HepG2 (cell line): ENCODE measurements at regions of chr12 and their contacts with region 1.

Region 1: DNA sequence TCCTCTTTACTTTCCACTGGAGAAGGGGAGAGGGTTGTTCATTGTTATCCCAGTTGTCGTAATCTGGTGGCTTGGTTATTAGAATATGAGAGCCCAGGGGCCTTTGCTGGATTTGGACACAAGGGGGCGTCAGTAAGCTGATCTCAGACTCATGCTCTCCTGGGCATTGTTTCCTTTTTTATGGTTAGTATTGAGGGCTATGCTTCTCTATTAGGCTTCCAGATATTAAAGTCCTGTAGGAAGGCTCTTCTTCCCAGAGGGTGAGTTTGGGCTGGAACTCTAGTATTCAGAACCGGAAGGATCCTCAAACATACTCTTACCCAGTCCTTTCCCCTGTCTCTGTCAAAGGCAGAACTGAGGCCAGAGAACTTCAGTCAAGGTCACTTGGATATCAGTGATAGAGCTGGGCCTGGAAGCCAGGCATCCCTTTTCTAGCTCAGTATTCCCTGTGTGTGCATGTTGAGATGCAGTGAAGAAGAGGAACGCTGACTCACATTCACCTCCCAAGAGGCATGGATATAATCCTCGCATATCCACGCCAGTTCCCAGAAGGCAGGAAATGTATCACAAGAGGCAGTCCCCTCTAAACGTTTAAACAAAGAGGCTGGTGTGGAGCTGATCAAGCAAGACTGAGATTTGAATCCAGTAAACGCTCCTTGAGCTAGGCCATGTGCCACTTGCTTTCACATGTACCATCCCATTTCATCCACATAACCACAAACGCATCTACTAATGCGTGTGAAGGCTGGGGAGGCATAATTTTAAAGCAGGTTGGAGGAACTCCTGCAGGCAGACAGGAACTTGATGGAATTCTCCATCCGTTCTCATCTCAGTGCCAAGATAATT is 41.6 kb downstream of the UBE3B start:
- DNase-seq: peak; percentile 43
- ATAC-seq: peak; percentile 85
- H3K4me3 ChIP-seq: no peak overlapping the region
- H3K27ac ChIP-seq: no peak overlapping the region
- H3K4me1 ChIP-seq: peaks cover 6% of the 10 kb centered on the region
- H3K27me3 ChIP-seq: no peaks in the 10 kb centered on the region
- CTCF ChIP-seq: peak; percentile 86
- EP300 ChIP-seq: no peak
- POLR2A ChIP-seq: no peak
- RAD21 ChIP-seq: peak; percentile 58

Region 2: GRCh38 chr12:108838194-108839017 is 680.6 kb before region 1 on chr12:
- CTCF ChIA-PET with region 1: no interaction called
- POLR2A ChIA-PET with region 1: no interaction called
- in situ Hi-C with region 1: no loop called
- intact Hi-C with region 1: no loop called
- DNase-seq: peak; percentile 80
- ATAC-seq: peak; percentile 77
- H3K4me3 ChIP-seq: no peak overlapping the region
- H3K27ac ChIP-seq: peak overlapping the region; percentile 54
- H3K4me1 ChIP-seq: peaks cover 27% of the 10 kb centered on the region
- H3K27me3 ChIP-seq: no peaks in the 10 kb centered on the region
- CTCF ChIP-seq: no peak
- EP300 ChIP-seq: no peak
- POLR2A ChIP-seq: no peak
- RAD21 ChIP-seq: no peak

Region 3: DNA sequence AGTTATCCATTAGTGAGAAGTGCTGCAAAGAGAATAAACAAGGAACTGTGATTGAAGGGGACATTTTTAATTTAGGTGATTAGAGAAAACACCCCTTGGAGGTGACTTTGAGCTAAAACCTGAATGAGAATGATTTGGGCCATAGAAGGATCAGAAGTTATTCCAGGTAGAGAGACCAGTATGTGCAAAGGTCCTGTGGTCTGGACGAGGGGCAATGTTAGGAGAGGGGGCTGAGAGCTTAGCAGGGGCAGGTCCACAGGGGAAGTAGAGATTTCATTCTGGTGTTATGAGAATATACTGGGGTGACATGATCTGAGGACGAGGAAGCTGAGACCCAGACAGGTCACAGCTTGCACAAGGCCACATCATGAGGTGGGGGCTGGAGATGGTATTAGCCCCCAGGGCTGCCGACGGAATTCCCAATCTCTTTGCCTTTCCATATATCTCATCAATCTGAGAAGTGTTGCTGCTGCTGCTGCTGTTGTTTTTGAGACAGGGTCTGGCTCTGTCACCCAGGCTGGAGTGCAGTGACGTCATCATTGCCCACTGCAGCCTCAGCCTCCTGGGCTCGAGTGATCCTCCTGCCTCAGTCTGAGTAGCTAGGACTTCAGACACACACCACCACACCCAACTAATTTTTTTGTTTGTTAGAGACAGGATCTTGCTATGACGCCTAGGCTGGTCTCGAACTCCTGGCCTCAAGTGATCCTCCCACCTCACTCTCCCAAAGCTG is 97.5 kb before region 1 on chr12:
- CTCF ChIA-PET with region 1: no interaction called
- POLR2A ChIA-PET with region 1: no interaction called
- in situ Hi-C with region 1: no loop called
- intact Hi-C with region 1: no loop called
- DNase-seq: no peak
- ATAC-seq: no peak
- H3K4me3 ChIP-seq: no peak overlapping the region
- H3K27ac ChIP-seq: no peak overlapping the region
- H3K4me1 ChIP-seq: no peaks in the 10 kb centered on the region
- H3K27me3 ChIP-seq: no peaks in the 10 kb centered on the region; a peak in 1 of 5 replicates
- CTCF ChIP-seq: no peak
- EP300 ChIP-seq: no peak
- POLR2A ChIP-seq: no peak
- RAD21 ChIP-seq: no peak

Region 4: GRCh38 chr12:109573029-109573913 is 54.2 kb after region 1 on chr12 and contains the starts of genes MMAB and MVK:
- CTCF ChIA-PET with region 1: no interaction called
- POLR2A ChIA-PET with region 1: no interaction called
- in situ Hi-C with region 1: no loop called
- intact Hi-C with region 1: no loop called
- DNase-seq: peak; percentile 99
- ATAC-seq: peak; percentile 95
- H3K4me3 ChIP-seq: peak within 1 kb of the TSS; percentile 57 to 79 (median 69)
- H3K27ac ChIP-seq: peak within 1 kb of the TSS; percentile 83
- H3K4me1 ChIP-seq: peaks cover 70% of the 10 kb centered on the region
- H3K27me3 ChIP-seq: no peaks in the 10 kb centered on the region
- CTCF ChIP-seq: no peak
- EP300 ChIP-seq: peak; percentile 49 to 52; a peak in 2 of 4 replicates
- POLR2A ChIP-seq: peak; percentile 84 to 86
- RAD21 ChIP-seq: peak; percentile 56
- total RNA-seq, gene MMAB: 77.3 and 112 TPM in 2 replicates
- total RNA-seq, gene MVK: 47.1 and 66.9 TPM in 2 replicates

Region 5: GRCh38 chr12:109719236-109720022 is 200.4 kb after region 1 on chr12:
- CTCF ChIA-PET with region 1: no interaction called
- POLR2A ChIA-PET with region 1: no interaction called
- in situ Hi-C with region 1: no loop called
- intact Hi-C with region 1: loop called (anchors 5 kb)
- DNase-seq: peak; percentile 66
- ATAC-seq: peak; percentile 50
- H3K4me3 ChIP-seq: no peak overlapping the region
- H3K27ac ChIP-seq: no peak overlapping the region
- H3K4me1 ChIP-seq: peaks cover 79% of the 10 kb centered on the region
- H3K27me3 ChIP-seq: no peaks in the 10 kb centered on the region
- CTCF ChIP-seq: peak; percentile 74
- EP300 ChIP-seq: no peak
- POLR2A ChIP-seq: no peak
- RAD21 ChIP-seq: peak; percentile 60

Region 6: DNA sequence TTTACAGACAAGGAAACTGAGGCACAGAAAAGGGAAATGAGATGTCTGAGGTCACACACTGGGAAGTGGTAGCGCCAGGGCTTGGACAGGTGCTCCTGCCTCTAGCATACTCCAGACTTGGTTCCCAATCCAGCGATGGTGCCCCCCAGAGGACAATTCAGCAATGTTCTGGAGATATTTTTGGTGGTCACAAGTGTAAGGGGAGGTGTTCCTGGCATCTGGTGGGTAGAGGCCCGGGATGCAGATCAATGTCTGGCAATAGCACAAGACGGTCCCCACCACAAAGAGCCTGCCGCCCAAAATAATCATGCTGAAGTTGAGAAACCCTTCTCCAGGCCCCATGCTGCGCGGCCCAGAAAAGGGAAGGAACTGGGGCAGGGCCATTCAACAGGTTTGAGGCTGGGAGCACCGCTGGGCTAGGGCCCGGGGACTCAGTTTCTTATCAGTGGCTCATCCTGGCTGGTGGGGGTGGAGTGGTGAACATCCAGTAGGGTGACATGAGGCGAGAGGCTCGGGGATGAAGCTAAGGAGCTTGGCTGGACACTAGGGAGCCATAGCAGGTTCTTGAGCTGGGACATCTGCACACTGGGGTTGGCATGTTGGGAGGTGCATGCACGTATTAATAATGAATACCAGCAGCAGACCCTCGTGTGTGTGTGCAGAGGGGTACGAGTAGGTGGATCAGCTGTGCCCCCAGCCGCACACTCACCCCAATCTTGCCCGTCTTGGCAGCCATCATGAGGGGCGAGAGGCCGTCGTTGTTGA is 279.0 kb after region 1 on chr12:
- CTCF ChIA-PET with region 1: interaction called, 5 read pairs
- POLR2A ChIA-PET with region 1: no interaction called
- in situ Hi-C with region 1: no loop called
- intact Hi-C with region 1: loop called (anchors 2 kb)
- DNase-seq: no peak
- ATAC-seq: peak; percentile 86
- H3K4me3 ChIP-seq: no peak overlapping the region
- H3K27ac ChIP-seq: no peak overlapping the region
- H3K4me1 ChIP-seq: no peaks in the 10 kb centered on the region
- H3K27me3 ChIP-seq: peaks cover 0 to 4% of the 10 kb centered on the region in 2 experiments; a peak in 1 of 5 replicates
- CTCF ChIP-seq: peak; percentile 60
- EP300 ChIP-seq: no peak
- POLR2A ChIP-seq: no peak
- RAD21 ChIP-seq: no peak